Activated CD4-positive, alpha-beta T cell treated with anti-CD3 and anti-CD28 coated beads, Interleukin-2, amount 10 ng/mL, durations not matched to agents 24 days and 14 days (primary cell): ENCODE measurements at regions of chr5 and their contacts with region 1.

Region 1: DNA sequence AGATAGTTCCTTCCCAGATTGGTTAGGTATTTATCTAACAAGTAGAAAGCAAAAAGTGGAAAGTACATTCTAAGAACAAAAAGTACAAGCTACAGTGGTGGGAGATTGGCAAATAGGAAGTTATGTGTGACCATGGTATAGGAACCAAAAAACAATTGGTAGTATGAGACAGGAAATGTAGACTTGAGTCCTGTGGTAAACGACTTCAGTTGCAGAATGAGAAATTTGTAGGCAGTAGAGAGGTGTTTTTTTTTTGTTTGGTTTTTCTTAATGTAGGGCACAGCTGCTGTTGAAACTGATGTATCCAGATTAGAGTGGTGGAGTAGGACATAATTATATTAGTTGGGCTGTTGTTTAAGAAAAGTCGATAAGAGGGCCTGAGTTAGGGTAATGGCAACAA is 72.0 kb downstream of the CCNH start:
- DNase-seq: peak; percentile 69
- H3K4me3 Mint-ChIP-seq: peak overlapping the region; percentile 70
- H3K27ac Mint-ChIP-seq: peak overlapping the region; percentile 67
- H3K4me1 Mint-ChIP-seq: peaks cover 17% of the 10 kb centered on the region
- H3K27me3 Mint-ChIP-seq: no peaks in the 10 kb centered on the region

Region 2: GRCh38 chr5:87121304-87122150 is 219.2 kb before region 1 on chr5:
- intact Hi-C with region 1: loop called (anchors 2 kb)
- DNase-seq: peak; percentile 82
- H3K4me3 Mint-ChIP-seq: peak overlapping the region; percentile 48
- H3K27ac Mint-ChIP-seq: peak overlapping the region; percentile 86
- H3K4me1 Mint-ChIP-seq: peaks cover 50% of the 10 kb centered on the region
- H3K27me3 Mint-ChIP-seq: no peaks in the 10 kb centered on the region

Region 3: DNA sequence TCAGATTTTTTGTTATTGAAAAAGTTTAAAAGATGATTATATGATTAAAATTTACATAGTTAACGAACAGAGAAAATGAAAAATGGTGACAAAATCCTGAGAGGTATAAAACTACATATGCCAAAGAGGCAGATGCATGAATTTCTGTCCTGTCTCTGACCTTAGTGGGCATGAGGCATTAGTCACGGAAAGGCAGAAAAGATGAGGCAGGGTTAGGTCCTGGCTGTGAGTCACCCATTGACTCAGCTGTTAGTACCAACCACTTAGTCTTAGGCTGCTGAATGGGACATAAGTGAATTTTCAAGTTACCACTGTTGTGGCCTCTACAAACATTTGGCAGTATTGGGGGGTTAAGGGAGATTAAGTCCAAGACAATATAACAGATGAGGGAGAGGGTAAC is 40.0 kb before region 1 on chr5:
- intact Hi-C with region 1: loop called (anchors 2 kb)
- DNase-seq: no peak
- H3K4me3 Mint-ChIP-seq: no peak overlapping the region
- H3K27ac Mint-ChIP-seq: no peak overlapping the region
- H3K4me1 Mint-ChIP-seq: peaks cover 50% of the 10 kb centered on the region
- H3K27me3 Mint-ChIP-seq: no peaks in the 10 kb centered on the region

Region 4: DNA sequence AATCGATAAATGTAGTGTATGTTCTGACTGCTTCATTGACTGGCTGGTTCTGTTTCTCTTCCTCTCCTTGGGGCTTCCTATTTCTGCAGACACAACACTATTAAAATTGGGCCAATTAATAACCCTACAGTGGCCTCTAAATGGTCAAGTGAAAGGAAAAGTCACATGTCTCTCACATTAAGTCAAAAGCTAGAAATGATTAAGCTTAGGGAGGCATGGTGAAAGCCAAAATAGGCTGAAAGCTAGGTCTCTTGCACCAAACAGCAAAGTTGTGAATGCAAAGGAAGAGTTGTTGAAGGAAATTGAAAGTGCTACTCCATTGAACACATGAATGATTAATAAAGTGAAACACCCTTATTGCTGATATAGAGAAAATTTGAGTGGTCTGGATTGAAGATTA is 13.8 kb after region 1 on chr5:
- intact Hi-C with region 1: loop called (anchors 1 kb)
- DNase-seq: no peak
- H3K4me3 Mint-ChIP-seq: no peak overlapping the region
- H3K27ac Mint-ChIP-seq: no peak overlapping the region
- H3K4me1 Mint-ChIP-seq: peaks cover 14% of the 10 kb centered on the region
- H3K27me3 Mint-ChIP-seq: no peaks in the 10 kb centered on the region